Activated CD4-positive, alpha-beta memory T cell treated with anti-CD3 and anti-CD28 coated beads, Interleukin-2, amount 10 ng/mL, durations not matched to agents 7 days and 5 days (primary cell): ENCODE measurements at regions of chr4 and their contacts with region 1.

Region 1: GRCh38 chr4:48085821-48086607 is 48.0 kb downstream of the TXK start:
- DNase-seq: no peak
- H3K4me3 Mint-ChIP-seq: no peak overlapping the region
- H3K27ac Mint-ChIP-seq: peak overlapping the region; percentile 40
- H3K4me1 Mint-ChIP-seq: no peaks in the 10 kb centered on the region
- H3K27me3 Mint-ChIP-seq: no peaks in the 10 kb centered on the region

Region 2: GRCh38 chr4:48002267-48002666 is 83.7 kb before region 1 on chr4:
- CTCF ChIA-PET with region 1: interaction called, 37 read pairs
- POLR2A ChIA-PET with region 1: no interaction called
- DNase-seq: no peak
- H3K4me3 Mint-ChIP-seq: no peak overlapping the region
- H3K27ac Mint-ChIP-seq: no peak overlapping the region
- H3K4me1 Mint-ChIP-seq: no peaks in the 10 kb centered on the region
- H3K27me3 Mint-ChIP-seq: peaks cover 6% of the 10 kb centered on the region